ENCODE measurements at regions of chr2 and their contacts with region 1.

Region 1: GRCh38 chr2:101823347-101823791 is 125.9 kb downstream of the MAP4K4 start:
- DNase-seq: peak; percentile 84
- H3K4me3 Mint-ChIP-seq: peak overlapping the region; percentile 3
- H3K27ac Mint-ChIP-seq: peak overlapping the region; percentile 71
- H3K4me1 Mint-ChIP-seq: peaks cover 70% of the 10 kb centered on the region
- H3K27me3 Mint-ChIP-seq: no peaks in the 10 kb centered on the region

Region 2: GRCh38 chr2:101135412-101136296 is 687.7 kb before region 1 on chr2:
- CTCF ChIA-PET with region 1: no interaction called
- intact Hi-C with region 1: no loop called
- DNase-seq: no peak
- H3K4me3 Mint-ChIP-seq: no peak overlapping the region
- H3K27ac Mint-ChIP-seq: no peak overlapping the region
- H3K4me1 Mint-ChIP-seq: no peaks in the 10 kb centered on the region
- H3K27me3 Mint-ChIP-seq: no peaks in the 10 kb centered on the region

Region 3: DNA sequence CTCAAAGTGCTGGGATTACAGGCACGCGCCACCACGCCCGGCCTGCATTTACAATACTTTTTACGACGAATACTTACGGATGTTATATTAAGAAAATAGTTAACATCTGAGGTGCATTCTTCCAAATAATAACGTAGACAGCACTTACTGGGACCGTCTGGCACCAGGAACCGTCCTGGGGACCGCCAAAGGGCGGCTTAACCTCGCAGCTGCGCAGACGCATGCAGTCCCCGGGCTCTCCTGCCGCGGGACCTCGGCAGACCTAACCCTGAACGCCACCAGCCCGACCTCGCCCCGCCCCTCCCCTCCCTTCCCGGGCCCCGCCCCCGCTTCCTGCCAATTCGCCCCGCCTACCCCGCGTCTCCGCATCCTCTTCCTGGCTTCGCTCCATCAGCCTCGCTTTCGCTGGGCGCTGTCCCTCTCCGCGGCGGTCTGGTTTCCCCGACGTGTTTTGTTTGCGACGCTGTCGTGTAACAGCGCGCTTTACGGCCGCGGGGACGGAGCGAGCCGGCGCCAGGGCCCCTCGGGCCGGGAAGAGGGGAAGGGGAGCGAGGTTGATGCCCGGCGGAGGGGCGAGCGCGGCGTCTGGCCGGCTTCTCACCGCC is 570.9 kb before region 1 on chr2 and contains the start of gene CNOT11:
- CTCF ChIA-PET with region 1: no interaction called
- intact Hi-C with region 1: loop called (anchors 5 kb)
- DNase-seq: peak; percentile 99
- H3K4me3 Mint-ChIP-seq: peak within 1 kb of the TSS; percentile 98
- H3K27ac Mint-ChIP-seq: peak within 1 kb of the TSS; percentile 93
- H3K4me1 Mint-ChIP-seq: peaks cover 39% of the 10 kb centered on the region
- H3K27me3 Mint-ChIP-seq: no peaks in the 10 kb centered on the region
- total RNA-seq, gene CNOT11: 38.3 to 40.3 TPM

Region 4: GRCh38 chr2:101419096-101419663 is 404.2 kb before region 1 on chr2:
- CTCF ChIA-PET with region 1: interaction called, 15 read pairs
- intact Hi-C with region 1: loop called (anchors 2 kb)
- DNase-seq: peak; percentile 82
- H3K4me3 Mint-ChIP-seq: no peak overlapping the region
- H3K27ac Mint-ChIP-seq: no peak overlapping the region
- H3K4me1 Mint-ChIP-seq: no peaks in the 10 kb centered on the region
- H3K27me3 Mint-ChIP-seq: no peaks in the 10 kb centered on the region

Region 5: GRCh38 chr2:101512993-101513392 is 310.4 kb before region 1 on chr2:
- CTCF ChIA-PET with region 1: no interaction called
- intact Hi-C with region 1: no loop called
- DNase-seq: no peak
- H3K4me3 Mint-ChIP-seq: no peak overlapping the region
- H3K27ac Mint-ChIP-seq: no peak overlapping the region
- H3K4me1 Mint-ChIP-seq: peaks cover 25% of the 10 kb centered on the region
- H3K27me3 Mint-ChIP-seq: no peaks in the 10 kb centered on the region

Region 6: DNA sequence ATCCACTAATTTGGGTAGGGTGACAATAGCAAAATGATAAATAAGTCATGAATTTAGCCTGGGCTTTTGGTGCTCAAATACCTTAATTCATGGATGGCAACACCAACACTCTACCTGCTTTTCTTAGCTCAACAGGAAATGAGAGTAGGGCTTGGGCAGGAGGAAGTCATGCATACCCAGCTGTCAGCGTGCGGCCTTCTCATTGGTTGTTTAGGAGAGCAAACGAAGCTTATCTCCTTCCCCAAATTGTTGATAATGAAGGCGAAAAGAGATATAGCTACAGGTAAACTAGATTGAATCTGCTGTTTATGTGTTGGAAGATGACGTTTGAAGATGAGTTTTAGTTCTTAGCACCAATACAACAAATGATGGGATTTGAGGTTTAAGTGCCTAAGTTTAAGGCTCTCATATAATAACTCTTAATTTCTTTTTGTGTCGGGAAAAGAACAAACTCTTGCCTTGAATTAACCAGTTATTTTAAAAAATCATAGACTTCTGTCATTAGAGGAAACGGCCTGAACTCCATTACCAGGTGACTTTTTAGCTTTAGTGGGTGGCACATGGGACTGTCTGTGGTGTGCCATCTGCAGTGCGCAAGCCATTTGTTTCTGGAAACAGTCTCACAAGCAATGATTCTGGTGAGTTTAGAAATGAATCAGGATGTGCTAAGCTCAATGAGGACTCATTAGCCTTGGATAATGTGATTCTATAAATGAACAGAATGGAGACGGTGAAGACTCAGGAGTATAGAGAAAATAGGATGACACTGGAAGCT is 106.1 kb before region 1 on chr2:
- CTCF ChIA-PET with region 1: interaction called, 14 read pairs
- intact Hi-C with region 1: no loop called
- DNase-seq: peak; percentile 75
- H3K4me3 Mint-ChIP-seq: peak overlapping the region; percentile 38
- H3K27ac Mint-ChIP-seq: peak overlapping the region; percentile 95
- H3K4me1 Mint-ChIP-seq: peaks cover 92% of the 10 kb centered on the region
- H3K27me3 Mint-ChIP-seq: no peaks in the 10 kb centered on the region

Region 7: GRCh38 chr2:101746388-101746723 is 77.0 kb before region 1 on chr2:
- CTCF ChIA-PET with region 1: no interaction called
- intact Hi-C with region 1: no loop called
- DNase-seq: no peak
- H3K4me3 Mint-ChIP-seq: no peak overlapping the region
- H3K27ac Mint-ChIP-seq: peak overlapping the region; percentile 18
- H3K4me1 Mint-ChIP-seq: peaks cover 71% of the 10 kb centered on the region
- H3K27me3 Mint-ChIP-seq: no peaks in the 10 kb centered on the region

Region 8: DNA sequence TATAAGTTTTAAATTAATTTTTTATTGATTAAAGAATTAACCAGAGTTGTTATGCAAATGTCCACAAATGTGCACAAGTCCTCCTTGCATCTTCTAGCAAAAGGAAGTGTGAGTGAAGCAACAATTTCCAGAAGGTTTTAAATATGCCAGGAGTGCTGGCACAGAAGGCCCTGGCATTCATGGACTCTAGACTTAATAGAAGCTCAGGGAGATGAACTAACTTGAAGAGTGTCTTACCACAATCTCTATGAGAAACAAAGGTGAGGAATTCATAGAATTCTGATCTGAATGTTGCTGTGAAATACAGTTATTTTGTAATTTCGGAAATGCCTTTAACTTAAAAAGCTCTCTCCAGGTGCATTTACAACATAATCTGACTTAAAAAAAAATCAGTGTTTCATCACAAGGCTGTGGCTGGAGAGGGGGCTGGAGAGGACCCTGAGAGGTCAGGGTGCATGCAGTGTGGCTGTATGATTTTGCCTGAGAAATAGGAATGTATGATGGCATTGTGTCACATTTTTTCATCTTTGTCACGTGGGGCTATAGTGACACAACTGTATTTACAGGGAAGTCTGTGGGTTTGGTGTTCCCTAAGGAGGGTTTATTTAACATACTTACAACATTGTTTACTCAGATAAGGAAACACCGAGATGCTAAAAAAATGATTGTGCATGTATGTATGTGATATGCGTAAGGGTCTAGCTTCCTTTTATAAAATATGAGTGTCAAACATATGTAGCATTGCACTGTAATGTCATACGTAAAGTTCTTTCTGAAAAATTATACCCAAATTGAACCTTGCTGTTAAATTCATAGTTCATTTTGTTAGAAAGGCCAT is 59.7 kb before region 1 on chr2:
- CTCF ChIA-PET with region 1: interaction called, 11 read pairs
- intact Hi-C with region 1: no loop called
- DNase-seq: no peak
- H3K4me3 Mint-ChIP-seq: no peak overlapping the region
- H3K27ac Mint-ChIP-seq: peak overlapping the region; percentile 38
- H3K4me1 Mint-ChIP-seq: peaks cover 71% of the 10 kb centered on the region
- H3K27me3 Mint-ChIP-seq: no peaks in the 10 kb centered on the region

Region 9: GRCh38 chr2:101770726-101771125 is 52.6 kb before region 1 on chr2:
- CTCF ChIA-PET with region 1: interaction called, 11 read pairs
- intact Hi-C with region 1: loop called (anchors 2 kb)
- DNase-seq: peak; percentile 37
- H3K4me3 Mint-ChIP-seq: no peak overlapping the region
- H3K27ac Mint-ChIP-seq: no peak overlapping the region
- H3K4me1 Mint-ChIP-seq: peaks cover 86% of the 10 kb centered on the region
- H3K27me3 Mint-ChIP-seq: no peaks in the 10 kb centered on the region

Region 10: DNA sequence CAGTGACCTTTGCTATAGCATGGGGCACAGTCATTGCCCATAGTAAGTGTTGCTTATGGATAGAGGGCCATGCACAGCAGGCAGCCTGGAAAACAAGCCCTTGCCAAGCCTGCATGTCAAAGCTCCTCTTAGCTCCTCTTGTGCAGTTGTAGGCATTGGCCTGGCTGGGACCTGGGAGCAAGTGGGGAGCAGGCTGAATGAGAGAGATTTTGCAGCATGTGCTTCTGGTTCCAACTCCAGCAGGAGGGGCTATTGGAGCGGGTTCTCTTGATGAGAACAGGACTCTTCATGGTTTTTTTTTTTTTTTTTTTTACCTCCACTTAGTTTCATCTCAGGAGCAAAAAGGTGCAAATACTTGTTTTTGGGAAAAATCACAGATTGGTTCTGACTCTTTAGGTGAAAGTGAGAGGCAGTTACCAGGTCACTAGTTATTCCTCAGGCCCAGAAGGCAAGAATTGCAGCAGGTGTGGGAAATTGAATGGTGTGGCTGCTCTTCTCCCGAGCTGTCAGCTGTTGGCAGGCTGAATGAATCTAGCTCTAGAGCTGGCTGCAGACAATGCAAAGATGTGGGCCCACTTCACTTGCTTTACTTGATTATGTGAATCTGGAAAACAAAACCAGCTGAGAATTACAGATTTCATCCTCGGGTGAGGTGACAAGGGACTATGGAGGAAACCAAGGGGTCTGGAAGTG is 29.9 kb before region 1 on chr2:
- CTCF ChIA-PET with region 1: interaction called, 4 read pairs
- intact Hi-C with region 1: loop called (anchors 2 kb)
- DNase-seq: no peak
- H3K4me3 Mint-ChIP-seq: no peak overlapping the region
- H3K27ac Mint-ChIP-seq: no peak overlapping the region
- H3K4me1 Mint-ChIP-seq: peaks cover 67% of the 10 kb centered on the region
- H3K27me3 Mint-ChIP-seq: no peaks in the 10 kb centered on the region

Measured in activated naive CD4-positive, alpha-beta T cell treated with anti-CD3 and anti-CD28 coated beads for 36 hours (primary cell).